Stomach (tissue), 19 donors: ENCODE measurements at regions of chr5 and their contacts with region 1.

Region 1: DNA sequence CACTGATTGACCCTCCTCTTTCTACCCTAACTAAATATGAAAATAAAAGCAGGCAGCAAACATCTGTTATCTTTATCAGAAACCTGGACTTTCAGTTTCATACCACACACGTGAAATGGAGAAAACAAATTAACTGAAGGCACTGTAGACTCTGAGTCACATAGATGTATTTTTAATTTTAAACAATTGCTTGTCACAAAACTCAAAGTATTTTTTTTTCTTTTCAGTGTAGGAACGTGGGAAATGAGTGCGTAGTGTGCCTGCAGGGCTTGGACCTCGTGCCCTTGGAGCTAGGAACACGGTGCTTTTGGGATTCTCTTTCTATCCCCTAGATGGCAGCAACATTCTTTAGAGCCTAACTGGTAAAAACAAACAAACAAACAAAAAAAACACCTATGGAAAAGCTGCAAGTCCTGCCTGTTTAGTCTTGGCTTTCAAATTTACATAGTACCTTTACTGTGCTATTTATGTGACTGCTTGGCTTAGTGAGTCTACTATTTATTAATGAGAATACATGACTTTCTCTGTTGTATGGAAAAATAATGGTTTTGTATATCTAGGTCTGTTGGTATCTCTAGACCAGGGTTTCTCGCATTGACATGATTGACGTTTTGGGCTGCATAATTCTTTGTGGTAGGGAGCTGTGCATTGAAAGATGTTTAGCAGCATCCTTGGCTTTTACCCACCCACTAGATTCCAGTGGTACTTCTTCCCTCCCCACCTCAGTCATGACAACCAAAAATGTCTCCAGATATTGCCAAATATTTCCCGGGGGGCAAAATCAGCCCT is 16.8 kb upstream of the ACTBL2 start:
- DNase-seq: peak in 1 of 2 donors; percentile 77
- H3K4me3 ChIP-seq: peak overlapping the region in 2 of 4 donors; percentile 4 to 23
- H3K27ac ChIP-seq: peak overlapping the region in 3 of 5 donors; percentile 23 to 45 (median 33)
- H3K4me1 ChIP-seq: peaks cover 0 to 41% (median 21%) of the 10 kb centered on the region in 4 donors
- H3K27me3 ChIP-seq: no peaks in the 10 kb centered on the region
- CTCF ChIP-seq: peak in 5 of 7 experiments; percentile 47 to 68 (median 50)
- EP300 ChIP-seq: no peak
- POLR2A ChIP-seq: no peak

Region 2: DNA sequence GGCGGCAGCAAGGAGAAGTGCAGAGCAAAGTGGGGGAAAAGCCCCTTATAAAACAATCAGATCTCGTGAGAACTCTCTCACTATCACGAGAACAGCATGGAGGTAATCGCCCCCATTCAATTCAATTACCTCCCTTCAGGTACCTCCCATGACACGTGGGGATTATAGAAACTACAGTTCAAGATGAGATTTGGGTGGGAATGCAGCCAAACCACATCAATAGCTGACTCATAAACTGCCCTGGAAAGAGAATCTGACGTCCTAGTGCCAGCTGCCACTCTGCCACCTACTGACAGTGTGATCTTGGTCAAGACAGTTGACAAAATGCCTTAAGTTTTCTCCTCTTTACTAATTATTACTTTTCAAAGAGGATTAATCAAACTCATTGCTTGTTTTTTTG is 197.3 kb before region 1 on chr5:
- intact Hi-C with region 1: loop called (anchors 10 kb)
- DNase-seq: peak in 1 of 2 donors; percentile 34
- H3K4me3 ChIP-seq: no peak overlapping the region
- H3K27ac ChIP-seq: no peak overlapping the region
- H3K4me1 ChIP-seq: peaks cover 6 to 18% (median 10%) of the 10 kb centered on the region in 4 donors
- H3K27me3 ChIP-seq: no peaks in the 10 kb centered on the region
- CTCF ChIP-seq: no peak
- EP300 ChIP-seq: no peak
- POLR2A ChIP-seq: no peak